HEK293 (cell line): ENCODE measurements at regions of chr16 and their contacts with region 1.

Region 1: GRCh38 chr16:82456683-82457082 is 170.1 kb upstream of the CDH13 start:
- H3K4me3 ChIP-seq: no peak overlapping the region
- H3K27ac ChIP-seq: no peak overlapping the region
- H3K4me1 ChIP-seq: no peaks in the 10 kb centered on the region; the same call in 1 of the 2 replicates
- CTCF ChIP-seq: peak; percentile 44

Region 2: DNA sequence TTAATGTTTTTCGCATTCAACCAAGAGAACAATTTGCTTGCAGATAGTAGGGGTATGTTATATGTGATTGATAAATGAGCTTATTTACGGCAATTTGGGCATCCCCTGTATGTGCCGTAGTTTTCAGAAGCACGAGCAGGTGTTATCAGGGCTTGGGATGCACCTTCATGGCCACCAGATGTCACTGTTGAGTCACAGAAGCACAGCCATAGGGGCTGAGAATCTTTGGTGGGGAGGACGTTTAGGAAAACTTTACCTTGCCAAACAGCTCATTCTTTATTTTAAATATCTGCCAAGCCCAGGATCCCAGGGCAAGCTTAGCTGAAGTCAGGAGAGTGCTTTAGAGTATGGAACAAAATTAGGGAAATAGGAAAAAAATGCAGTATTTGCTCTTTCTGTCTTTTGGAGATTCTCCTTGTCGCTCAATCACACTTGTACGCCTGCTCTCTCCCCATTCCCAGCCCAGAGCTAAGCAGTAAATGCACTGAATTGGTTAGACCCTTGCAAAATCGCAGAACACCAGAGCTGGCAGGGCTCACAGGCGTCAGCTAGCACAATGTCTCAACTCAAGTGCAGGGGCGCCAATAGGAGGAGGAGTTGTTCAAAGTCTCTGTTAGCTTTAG is 193.1 kb before region 1 on chr16:
- CTCF ChIA-PET with region 1: interaction called, 47 read pairs
- POLR2A ChIA-PET with region 1: no interaction called
- H3K4me3 ChIP-seq: no peak overlapping the region
- H3K27ac ChIP-seq: no peak overlapping the region
- H3K4me1 ChIP-seq: no peaks in the 10 kb centered on the region
- CTCF ChIP-seq: peak; percentile 76

Region 3: GRCh38 chr16:82432261-82432660 is 24.4 kb before region 1 on chr16:
- CTCF ChIA-PET with region 1: interaction called, 26 read pairs
- POLR2A ChIA-PET with region 1: no interaction called
- H3K4me3 ChIP-seq: no peak overlapping the region
- H3K27ac ChIP-seq: no peak overlapping the region
- H3K4me1 ChIP-seq: no peaks in the 10 kb centered on the region
- CTCF ChIP-seq: no peak

Region 4: GRCh38 chr16:82470620-82471152 is 14.0 kb after region 1 on chr16:
- CTCF ChIA-PET with region 1: interaction called, 27 read pairs
- POLR2A ChIA-PET with region 1: no interaction called
- H3K4me3 ChIP-seq: no peak overlapping the region
- H3K27ac ChIP-seq: no peak overlapping the region
- H3K4me1 ChIP-seq: no peaks in the 10 kb centered on the region
- CTCF ChIP-seq: no peak

Region 5: DNA sequence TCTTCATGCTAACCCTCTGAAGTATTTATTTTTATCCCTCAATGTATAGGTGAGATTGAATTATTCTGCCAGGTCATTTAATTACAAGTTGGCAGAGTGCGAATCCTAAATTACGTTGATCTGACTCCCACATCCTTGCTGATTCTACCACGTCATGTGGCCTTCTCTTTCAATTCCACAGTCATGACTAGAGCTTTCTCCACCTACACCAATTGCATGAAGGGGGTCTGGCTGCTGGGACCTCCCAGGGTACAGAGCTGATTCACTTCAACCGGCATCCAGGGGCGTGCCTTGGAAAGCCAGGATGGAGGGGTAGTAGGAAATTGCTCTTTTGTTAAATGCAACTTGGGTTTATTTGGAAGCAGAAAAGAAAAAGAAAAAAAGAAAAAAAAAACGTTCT is 129.0 kb after region 1 on chr16:
- CTCF ChIA-PET with region 1: interaction called, 10 read pairs
- POLR2A ChIA-PET with region 1: no interaction called
- H3K4me3 ChIP-seq: no peak overlapping the region
- H3K27ac ChIP-seq: no peak overlapping the region
- H3K4me1 ChIP-seq: no peaks in the 10 kb centered on the region
- CTCF ChIP-seq: no peak

Region 6: GRCh38 chr16:82782715-82783251 is 326.1 kb after region 1 on chr16:
- CTCF ChIA-PET with region 1: no interaction called
- POLR2A ChIA-PET with region 1: no interaction called
- H3K4me3 ChIP-seq: no peak overlapping the region
- H3K27ac ChIP-seq: no peak overlapping the region
- H3K4me1 ChIP-seq: no peaks in the 10 kb centered on the region
- CTCF ChIP-seq: no peak